ENCODE measurements at regions of chr15 and their contacts with region 1.

Region 1: GRCh38 chr15:80567721-80568157 is 127.4 kb upstream of the ABHD17C start:
- DNase-seq: no peak
- H3K4me3 ChIP-seq: no peak overlapping the region
- H3K27ac ChIP-seq: no peak overlapping the region
- H3K4me1 ChIP-seq: no peaks in the 10 kb centered on the region
- H3K27me3 ChIP-seq: no peaks in the 10 kb centered on the region
- CTCF ChIP-seq: peak; percentile 27 to 77 (median 61)
- POLR2A ChIP-seq: no peak

Region 2: GRCh38 chr15:78654272-78654671 is 1913.5 kb before region 1 on chr15:
- intact Hi-C with region 1: no loop called
- DNase-seq: no peak
- H3K4me3 ChIP-seq: no peak overlapping the region
- H3K27ac ChIP-seq: no peak overlapping the region
- H3K4me1 ChIP-seq: no peaks in the 10 kb centered on the region
- H3K27me3 ChIP-seq: no peaks in the 10 kb centered on the region
- CTCF ChIP-seq: no peak
- POLR2A ChIP-seq: no peak

Region 3: GRCh38 chr15:79130535-79131130 is 1437.1 kb before region 1 on chr15:
- intact Hi-C with region 1: no loop called
- DNase-seq: no peak
- H3K4me3 ChIP-seq: no peak overlapping the region
- H3K27ac ChIP-seq: no peak overlapping the region
- H3K4me1 ChIP-seq: no peaks in the 10 kb centered on the region
- H3K27me3 ChIP-seq: no peaks in the 10 kb centered on the region
- CTCF ChIP-seq: no peak
- POLR2A ChIP-seq: no peak

Region 4: GRCh38 chr15:80455668-80456442 is 111.9 kb before region 1 on chr15:
- intact Hi-C with region 1: loop called (anchors 10 kb)
- DNase-seq: no peak
- H3K4me3 ChIP-seq: no peak overlapping the region
- H3K27ac ChIP-seq: no peak overlapping the region
- H3K4me1 ChIP-seq: peaks cover 9% of the 10 kb centered on the region
- H3K27me3 ChIP-seq: no peaks in the 10 kb centered on the region
- CTCF ChIP-seq: peak; percentile 86 to 96 (median 92)
- POLR2A ChIP-seq: no peak

Region 5: GRCh38 chr15:80604583-80605575 is 37.1 kb after region 1 on chr15:
- intact Hi-C with region 1: loop called (anchors 5 kb)
- DNase-seq: peak in 1 of 2 donors; percentile 47
- H3K4me3 ChIP-seq: no peak overlapping the region
- H3K27ac ChIP-seq: no peak overlapping the region
- H3K4me1 ChIP-seq: peaks cover 28% of the 10 kb centered on the region
- H3K27me3 ChIP-seq: no peaks in the 10 kb centered on the region
- CTCF ChIP-seq: no peak
- POLR2A ChIP-seq: no peak

Region 6: DNA sequence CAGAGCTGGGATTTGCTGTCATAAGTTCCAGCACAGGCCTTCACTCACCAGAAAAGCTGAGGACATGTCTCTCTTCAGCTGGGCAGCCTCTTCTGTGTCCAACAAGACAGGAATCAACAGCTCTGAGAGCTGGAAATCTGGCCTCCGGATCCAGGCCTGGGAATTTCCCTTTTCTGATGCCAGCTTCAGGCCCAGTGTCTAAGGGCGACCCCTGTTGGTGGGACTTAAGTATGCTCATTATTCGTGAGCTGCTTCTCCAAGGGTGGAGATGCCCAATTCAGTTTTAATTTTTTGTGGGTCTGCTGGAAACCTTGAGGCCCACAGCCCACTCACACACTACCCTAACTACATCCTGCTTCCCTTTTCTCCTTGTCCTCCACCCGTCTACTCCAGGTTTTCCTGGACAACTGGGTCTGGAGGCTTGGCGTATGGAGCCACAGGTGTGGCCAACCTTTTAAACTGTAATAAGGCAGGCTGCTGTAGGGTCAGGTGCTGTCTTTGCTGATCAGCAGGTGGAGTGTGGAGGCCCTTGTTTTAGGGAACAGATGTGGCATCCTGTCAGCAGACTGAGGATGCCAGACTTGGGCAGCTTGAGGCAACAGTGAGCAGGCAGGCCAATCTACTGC is 208.8 kb after region 1 on chr15:
- intact Hi-C with region 1: loop called (anchors 5 kb)
- DNase-seq: no peak
- H3K4me3 ChIP-seq: no peak overlapping the region
- H3K27ac ChIP-seq: no peak overlapping the region
- H3K4me1 ChIP-seq: peaks cover 36% of the 10 kb centered on the region
- H3K27me3 ChIP-seq: no peaks in the 10 kb centered on the region
- CTCF ChIP-seq: peak; percentile 44 to 62 (median 57)
- POLR2A ChIP-seq: no peak

Region 7: GRCh38 chr15:80970018-80970658 is 402.4 kb after region 1 on chr15:
- intact Hi-C with region 1: loop called (anchors 2 kb)
- DNase-seq: peak in 1 of 2 donors; percentile 64
- H3K4me3 ChIP-seq: no peak overlapping the region
- H3K27ac ChIP-seq: no peak overlapping the region
- H3K4me1 ChIP-seq: no peaks in the 10 kb centered on the region
- H3K27me3 ChIP-seq: no peaks in the 10 kb centered on the region
- CTCF ChIP-seq: peak; percentile 70 to 84 (median 80)
- POLR2A ChIP-seq: no peak